Left ventricle myocardium superior (tissue), 1 donor: ENCODE measurements at regions of chr2 and their contacts with region 1.

Region 1: GRCh38 chr2:176643646-176644045 is 374.4 kb downstream of the MTX2 start:
- DNase-seq: no peak
- ATAC-seq: no peak

Region 2: DNA sequence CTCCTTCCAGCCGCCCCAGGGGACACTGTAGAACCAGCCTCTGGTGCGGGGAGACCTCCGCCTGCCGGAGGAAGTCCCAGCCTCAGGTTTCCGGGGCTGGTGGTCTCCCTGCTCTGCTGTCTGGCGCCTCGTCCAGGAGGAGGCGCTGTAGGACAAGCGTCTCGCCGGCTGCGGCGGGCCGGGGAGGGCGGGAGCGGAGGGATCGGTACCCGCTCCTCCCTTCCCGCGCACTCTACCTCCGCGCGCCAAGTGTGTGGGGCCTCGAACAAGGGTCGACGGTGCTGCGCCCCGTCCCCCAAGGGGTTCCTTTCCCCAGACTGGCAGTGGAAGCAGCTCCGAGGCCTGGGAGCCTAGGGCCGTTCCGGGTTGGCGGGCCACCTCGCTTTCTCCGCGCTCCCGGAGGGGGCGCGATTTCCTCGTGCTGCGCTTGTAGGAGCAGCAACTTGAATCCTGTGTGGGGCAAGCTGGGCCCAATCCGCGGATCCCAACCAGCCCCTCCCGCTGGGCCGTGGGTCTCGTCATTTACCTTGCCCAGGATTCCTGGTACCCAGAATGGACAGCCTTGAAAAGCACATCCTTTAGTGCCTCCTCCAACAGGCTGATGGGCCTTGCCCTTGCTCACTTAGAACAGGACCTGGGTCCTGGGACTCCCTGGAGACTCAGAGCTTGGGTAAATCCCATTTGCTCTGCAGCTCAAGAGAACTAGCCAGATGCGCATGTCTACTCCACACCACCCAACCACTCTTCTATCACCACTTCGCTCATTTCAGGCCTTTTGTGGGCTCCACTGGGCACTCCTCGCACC is 502.9 kb before region 1 on chr2:
- intact Hi-C with region 1: loop called (anchors 5 kb)
- DNase-seq: peak; percentile 80
- ATAC-seq: peak; percentile 97

Region 3: DNA sequence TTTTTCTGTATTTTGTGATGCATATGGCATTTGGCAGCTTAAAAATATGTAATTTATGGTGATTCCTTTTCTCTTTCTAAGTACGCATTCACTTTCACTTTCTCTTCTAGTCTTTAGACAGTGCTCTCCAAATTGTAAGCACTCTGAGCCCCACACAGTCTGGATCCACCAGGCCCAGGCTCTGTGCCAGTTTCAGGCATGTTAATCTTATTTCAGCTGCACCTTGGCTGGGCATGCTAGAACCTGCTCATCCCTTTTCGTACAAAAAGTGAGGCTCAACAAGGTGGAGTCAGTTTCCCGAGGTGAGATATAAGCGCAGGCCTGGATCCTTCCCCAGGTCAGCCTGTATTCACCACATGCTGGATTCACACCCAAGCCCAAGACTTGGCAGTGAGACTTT is 170.5 kb before region 1 on chr2:
- intact Hi-C with region 1: loop called (anchors 10 kb)
- DNase-seq: peak; percentile 60
- ATAC-seq: peak; percentile 88

Region 4: GRCh38 chr2:176595986-176596385 is 47.7 kb before region 1 on chr2:
- intact Hi-C with region 1: no loop called
- DNase-seq: no peak
- ATAC-seq: no peak

Region 5: DNA sequence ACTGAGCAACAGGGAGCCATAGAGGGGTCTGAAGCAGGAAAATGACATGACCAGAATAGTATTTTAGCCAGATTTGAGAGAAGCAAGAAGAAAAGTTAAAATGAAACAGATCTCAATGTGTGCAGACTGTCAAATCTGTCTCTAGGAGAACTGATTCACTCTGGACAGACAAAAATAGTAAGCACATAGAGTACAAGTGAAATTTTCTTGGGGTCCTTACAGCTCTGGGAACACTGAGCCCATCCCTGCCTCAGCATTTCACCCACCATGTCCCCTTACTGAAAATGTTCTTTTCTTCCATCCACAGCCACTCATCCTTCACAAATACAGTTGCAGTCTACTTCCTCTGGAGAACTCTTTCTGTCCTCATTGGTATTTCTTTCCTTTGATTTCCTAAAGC is 15.2 kb before region 1 on chr2:
- intact Hi-C with region 1: no loop called
- DNase-seq: no peak
- ATAC-seq: peak; percentile 75

Region 6: DNA sequence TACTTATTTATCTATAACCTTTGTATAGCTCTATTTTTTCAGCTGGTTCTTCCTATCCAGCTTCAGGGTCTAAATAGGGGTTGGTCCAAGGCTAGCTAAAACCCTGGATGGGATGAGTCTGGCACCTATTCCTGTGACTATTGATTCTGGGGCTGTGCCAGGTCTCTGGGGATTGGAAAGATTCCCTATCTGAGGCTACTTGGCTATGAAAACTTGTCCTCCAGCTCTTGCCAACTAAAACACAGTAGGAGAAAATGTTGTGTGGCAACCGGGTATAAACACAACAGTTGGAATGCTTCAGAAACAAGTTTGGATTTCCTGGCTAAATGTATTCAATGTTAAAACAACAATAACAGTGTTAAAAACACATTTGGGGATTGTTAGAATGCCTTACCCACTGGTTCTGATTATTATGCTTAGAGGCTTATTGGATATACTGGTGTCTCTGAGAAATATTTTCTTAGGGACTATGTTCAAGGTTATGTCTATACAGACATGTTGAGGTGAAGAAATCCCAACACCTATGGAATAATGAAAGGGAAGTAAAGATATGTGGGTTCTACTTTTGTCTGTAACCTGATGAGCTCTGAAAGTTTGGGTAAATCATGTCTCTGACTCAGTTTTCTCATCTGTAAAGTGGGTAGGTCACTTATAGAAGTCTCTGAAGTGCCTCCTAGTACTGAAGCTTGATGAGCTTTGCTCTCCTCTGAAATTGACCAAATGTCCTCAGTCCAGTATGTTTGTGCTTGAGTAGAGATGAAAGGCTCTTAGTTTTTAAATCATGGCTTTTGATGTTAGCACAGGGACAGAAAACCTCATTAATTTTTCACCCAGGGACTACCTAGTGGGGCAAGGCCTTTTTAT is 86.3 kb after region 1 on chr2:
- intact Hi-C with region 1: no loop called
- DNase-seq: peak; percentile 27
- ATAC-seq: peak; percentile 88

Region 7: GRCh38 chr2:177618255-177619253 is 974.9 kb after region 1 on chr2:
- intact Hi-C with region 1: no loop called
- DNase-seq: peak; percentile 95
- ATAC-seq: peak; percentile 98